CD8-positive, alpha-beta T cell (primary cell): ENCODE measurements at regions of chr16 and their contacts with region 1.

Region 1: GRCh38 chr16:72475688-72476087 is 303.7 kb upstream of the PMFBP1 start:
- DNase-seq: no peak
- ATAC-seq: no peak
- H3K4me3 ChIP-seq: no peak overlapping the region
- H3K4me3 Mint-ChIP-seq: no peak overlapping the region
- H3K27ac ChIP-seq: no peak overlapping the region
- H3K27ac Mint-ChIP-seq: no peak overlapping the region
- H3K4me1 ChIP-seq: no peaks in the 10 kb centered on the region
- H3K4me1 Mint-ChIP-seq: peaks cover 3% of the 10 kb centered on the region
- H3K27me3 ChIP-seq: no peaks in the 10 kb centered on the region
- H3K27me3 Mint-ChIP-seq: no peaks in the 10 kb centered on the region
- CTCF ChIP-seq: no peak

Region 2: DNA sequence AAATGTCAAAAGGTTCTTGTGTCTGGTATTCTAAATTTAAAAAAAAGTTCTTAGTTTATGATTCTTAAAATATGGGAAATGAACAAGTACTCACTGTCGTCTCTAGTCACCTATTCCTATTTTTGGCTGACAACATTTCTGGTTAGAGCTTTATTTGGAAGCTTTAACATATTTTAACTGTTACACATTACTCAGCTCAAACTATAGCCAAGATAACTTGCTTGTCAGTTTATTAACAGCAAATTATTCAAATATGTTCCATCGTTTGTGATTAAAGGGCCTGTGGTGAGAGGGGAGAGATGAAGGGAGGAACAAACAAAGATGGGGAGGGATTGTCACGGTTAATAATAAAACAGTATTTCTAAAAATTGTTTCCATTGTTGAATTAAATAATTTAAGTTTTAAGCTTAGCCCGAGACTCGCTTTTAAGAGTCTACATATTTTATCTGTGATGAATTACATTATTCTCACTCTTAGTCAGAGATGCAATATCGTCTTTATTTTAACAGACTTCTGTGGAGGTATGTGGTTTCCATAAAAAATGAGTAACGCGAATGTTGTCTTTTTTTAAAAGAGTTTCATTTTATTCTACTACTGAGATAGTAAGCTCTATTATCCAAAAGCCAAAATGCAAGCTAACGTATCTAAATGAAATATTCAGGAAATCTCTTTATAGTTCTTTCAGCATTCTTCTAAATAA is 18.2 kb after region 1 on chr16:
- CTCF ChIA-PET with region 1: no interaction called
- POLR2A ChIA-PET with region 1: no interaction called
- intact Hi-C with region 1: no loop called
- DNase-seq: no peak
- ATAC-seq: no peak
- H3K4me3 ChIP-seq: no peak overlapping the region
- H3K4me3 Mint-ChIP-seq: no peak overlapping the region
- H3K27ac ChIP-seq: no peak overlapping the region
- H3K27ac Mint-ChIP-seq: no peak overlapping the region
- H3K4me1 ChIP-seq: no peaks in the 10 kb centered on the region
- H3K4me1 Mint-ChIP-seq: no peaks in the 10 kb centered on the region
- H3K27me3 ChIP-seq: no peaks in the 10 kb centered on the region
- H3K27me3 Mint-ChIP-seq: no peaks in the 10 kb centered on the region
- CTCF ChIP-seq: no peak

Region 3: DNA sequence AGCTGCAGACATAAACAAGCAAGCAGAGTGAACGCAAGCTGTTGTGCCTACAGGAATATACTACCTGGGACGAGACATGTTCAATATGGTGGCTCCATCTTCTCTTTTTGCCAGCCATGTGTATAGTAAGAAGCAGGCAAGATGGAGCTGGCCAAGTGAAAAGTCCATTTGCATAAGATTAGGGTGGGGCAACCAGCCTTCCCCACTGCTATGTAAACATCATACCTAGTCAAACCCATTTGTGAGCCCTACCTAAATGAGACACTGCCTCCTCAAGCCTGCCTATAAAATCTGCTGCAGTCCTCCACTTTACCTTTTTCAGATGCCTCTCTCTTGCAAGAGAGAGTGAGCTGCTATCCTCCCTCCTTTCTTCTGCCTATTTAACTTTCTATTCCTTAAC is 66.4 kb after region 1 on chr16:
- CTCF ChIA-PET with region 1: no interaction called
- POLR2A ChIA-PET with region 1: no interaction called
- intact Hi-C with region 1: loop called in 1 of 2 experiments (anchors 2 kb)
- DNase-seq: no peak
- ATAC-seq: no peak
- H3K4me3 ChIP-seq: no peak overlapping the region
- H3K4me3 Mint-ChIP-seq: no peak overlapping the region
- H3K27ac ChIP-seq: no peak overlapping the region
- H3K27ac Mint-ChIP-seq: no peak overlapping the region
- H3K4me1 ChIP-seq: no peaks in the 10 kb centered on the region
- H3K4me1 Mint-ChIP-seq: no peaks in the 10 kb centered on the region
- H3K27me3 ChIP-seq: no peaks in the 10 kb centered on the region
- H3K27me3 Mint-ChIP-seq: no peaks in the 10 kb centered on the region
- CTCF ChIP-seq: no peak

Region 4: GRCh38 chr16:72723781-72724180 is 248.1 kb after region 1 on chr16:
- CTCF ChIA-PET with region 1: no interaction called
- POLR2A ChIA-PET with region 1: no interaction called
- intact Hi-C with region 1: no loop called
- DNase-seq: no peak
- ATAC-seq: no peak
- H3K4me3 ChIP-seq: no peak overlapping the region
- H3K4me3 Mint-ChIP-seq: no peak overlapping the region
- H3K27ac ChIP-seq: no peak overlapping the region
- H3K27ac Mint-ChIP-seq: no peak overlapping the region
- H3K4me1 ChIP-seq: no peaks in the 10 kb centered on the region
- H3K4me1 Mint-ChIP-seq: no peaks in the 10 kb centered on the region
- H3K27me3 ChIP-seq: no peaks in the 10 kb centered on the region
- H3K27me3 Mint-ChIP-seq: no peaks in the 10 kb centered on the region
- CTCF ChIP-seq: no peak

Region 5: GRCh38 chr16:72995151-72995881 is 519.6 kb after region 1 on chr16:
- CTCF ChIA-PET with region 1: no interaction called
- POLR2A ChIA-PET with region 1: no interaction called
- intact Hi-C with region 1: no loop called
- DNase-seq: peak in 1 of 9 experiments; percentile 13
- ATAC-seq: no peak
- H3K4me3 ChIP-seq: no peak overlapping the region
- H3K4me3 Mint-ChIP-seq: no peak overlapping the region
- H3K27ac ChIP-seq: no peak overlapping the region
- H3K27ac Mint-ChIP-seq: no peak overlapping the region
- H3K4me1 ChIP-seq: no peaks in the 10 kb centered on the region
- H3K4me1 Mint-ChIP-seq: no peaks in the 10 kb centered on the region
- H3K27me3 ChIP-seq: no peaks in the 10 kb centered on the region
- H3K27me3 Mint-ChIP-seq: no peaks in the 10 kb centered on the region
- CTCF ChIP-seq: no peak